Right lobe of liver (tissue), 6 donors: ENCODE measurements at regions of chr22 and their contacts with region 1.

Region 1: GRCh38 chr22:39240828-39241793 is 3.7 kb downstream of the PDGFB start:
- DNase-seq: no peak
- ATAC-seq: peak; percentile 6 to 36 (median 16)
- H3K4me3 ChIP-seq: peak overlapping the region; percentile 48 to 53 (median 51)
- H3K27ac ChIP-seq: peak overlapping the region in 2 of 3 donors; percentile 4 to 38
- H3K4me1 ChIP-seq: peaks cover 0 to 25% (median 4%) of the 10 kb centered on the region in 4 donors
- H3K27me3 ChIP-seq: no peaks in the 10 kb centered on the region
- CTCF ChIP-seq: no peak
- POLR2A ChIP-seq: no peak

Region 2: DNA sequence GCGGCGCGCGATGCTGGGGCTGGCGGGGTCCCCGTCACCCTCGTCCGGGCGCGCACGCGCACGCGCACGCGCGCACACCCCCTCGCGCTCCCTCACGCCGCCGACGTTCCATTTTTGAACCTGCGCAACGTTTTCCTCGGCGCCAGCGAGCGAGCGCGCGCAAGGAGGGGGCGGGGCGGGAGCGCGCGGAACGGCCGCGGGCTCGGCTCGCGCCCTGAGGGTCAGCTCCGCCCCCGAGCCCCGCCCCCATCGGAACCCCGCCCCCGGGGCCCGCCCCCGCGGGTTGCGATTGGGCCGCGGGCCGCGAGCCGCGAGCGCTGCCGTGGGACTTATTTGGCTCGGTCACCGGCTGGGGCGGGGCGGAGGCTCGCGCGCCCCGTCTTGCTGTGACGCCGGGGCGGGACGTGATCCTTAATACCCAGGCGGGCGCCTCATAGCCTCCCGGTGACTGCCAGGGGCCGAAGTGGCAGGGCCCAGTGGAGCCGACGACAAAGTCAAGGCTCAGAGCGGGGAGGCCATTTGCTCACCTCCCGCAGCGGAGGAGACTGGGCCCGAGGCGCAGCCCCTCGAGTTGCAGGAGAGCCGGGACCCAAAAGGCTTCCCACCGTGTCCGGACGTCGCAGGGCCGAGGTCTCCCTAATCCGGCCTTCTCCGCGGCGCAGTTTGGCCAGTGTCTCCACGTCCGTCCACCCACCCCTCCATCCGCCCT is 88.4 kb before region 1 on chr22 and contains the start of gene CBX7:
- intact Hi-C with region 1: no loop called
- DNase-seq: peak; percentile 96 to 97 (median 96)
- ATAC-seq: peak; percentile 88 to 96 (median 92)
- H3K4me3 ChIP-seq: peak within 1 kb of the TSS; percentile 67 to 89 (median 76)
- H3K27ac ChIP-seq: peak within 1 kb of the TSS; percentile 83 to 91 (median 86)
- H3K4me1 ChIP-seq: peaks cover 0 to 22% (median 0%) of the 10 kb centered on the region in 4 donors
- H3K27me3 ChIP-seq: no peaks in the 10 kb centered on the region
- CTCF ChIP-seq: no peak
- POLR2A ChIP-seq: peak; percentile 66
- total RNA-seq, gene CBX7: 8.0 to 14.5 (median 12.9) TPM

Region 3: GRCh38 chr22:39319270-39320022 is 78.3 kb after region 1 on chr22 and contains the start of gene RPL3:
- intact Hi-C with region 1: loop called in 1 of 2 experiments (anchors 10 kb)
- DNase-seq: peak; percentile 95 to 97 (median 96)
- ATAC-seq: peak; percentile 78 to 87 (median 86)
- H3K4me3 ChIP-seq: peak within 1 kb of the TSS; percentile 65 to 93 (median 91)
- H3K27ac ChIP-seq: peak within 1 kb of the TSS; percentile 97 to 99 (median 98)
- H3K4me1 ChIP-seq: peaks cover 3 to 36% (median 18%) of the 10 kb centered on the region in 4 donors
- H3K27me3 ChIP-seq: no peaks in the 10 kb centered on the region
- CTCF ChIP-seq: peak in 2 of 4 donors; percentile 6 to 20
- POLR2A ChIP-seq: peak; percentile 89
- total RNA-seq, gene RPL3: 648 to 905 (median 743) TPM